ENCODE measurements at regions of chr1 and their contacts with region 1.

Region 1: GRCh38 chr1:27357281-27358037 is 9.3 kb downstream of the MAP3K6 start:
- DNase-seq: no peak
- H3K4me3 ChIP-seq: peak overlapping the region in 2 of 4 donors; percentile 16 to 29
- H3K27ac ChIP-seq: peak overlapping the region in 1 of 4 donors; percentile 22
- H3K4me1 ChIP-seq: peaks cover 18 to 30% (median 27%) of the 10 kb centered on the region in 4 donors
- H3K27me3 ChIP-seq: no peaks in the 10 kb centered on the region
- CTCF ChIP-seq: peak; percentile 95 to 98 (median 97)
- EP300 ChIP-seq: no peak
- POLR2A ChIP-seq: no peak

Region 2: GRCh38 chr1:27300341-27301051 is 57.0 kb before region 1 on chr1:
- intact Hi-C with region 1: loop called (anchors 2 kb)
- DNase-seq: peak; percentile 95
- H3K4me3 ChIP-seq: no peak overlapping the region
- H3K27ac ChIP-seq: peak overlapping the region; percentile 87 to 96 (median 92)
- H3K4me1 ChIP-seq: peaks cover 34 to 50% (median 48%) of the 10 kb centered on the region in 4 donors
- H3K27me3 ChIP-seq: no peaks in the 10 kb centered on the region
- CTCF ChIP-seq: peak in 2 of 3 experiments; percentile 98 to 100
- EP300 ChIP-seq: no peak
- POLR2A ChIP-seq: no peak

Region 3: GRCh38 chr1:27979151-27979858 is 621.8 kb after region 1 on chr1:
- intact Hi-C with region 1: no loop called
- DNase-seq: no peak
- H3K4me3 ChIP-seq: no peak overlapping the region
- H3K27ac ChIP-seq: peak overlapping the region in 3 of 4 donors; percentile 0 to 37 (median 30)
- H3K4me1 ChIP-seq: peaks cover 6 to 24% (median 18%) of the 10 kb centered on the region in 4 donors
- H3K27me3 ChIP-seq: no peaks in the 10 kb centered on the region
- CTCF ChIP-seq: peak; percentile 39 to 63 (median 52)
- EP300 ChIP-seq: no peak
- POLR2A ChIP-seq: no peak